MCF 10A (cell line): ENCODE measurements at regions of chr14 and their contacts with region 1.

Region 1: DNA sequence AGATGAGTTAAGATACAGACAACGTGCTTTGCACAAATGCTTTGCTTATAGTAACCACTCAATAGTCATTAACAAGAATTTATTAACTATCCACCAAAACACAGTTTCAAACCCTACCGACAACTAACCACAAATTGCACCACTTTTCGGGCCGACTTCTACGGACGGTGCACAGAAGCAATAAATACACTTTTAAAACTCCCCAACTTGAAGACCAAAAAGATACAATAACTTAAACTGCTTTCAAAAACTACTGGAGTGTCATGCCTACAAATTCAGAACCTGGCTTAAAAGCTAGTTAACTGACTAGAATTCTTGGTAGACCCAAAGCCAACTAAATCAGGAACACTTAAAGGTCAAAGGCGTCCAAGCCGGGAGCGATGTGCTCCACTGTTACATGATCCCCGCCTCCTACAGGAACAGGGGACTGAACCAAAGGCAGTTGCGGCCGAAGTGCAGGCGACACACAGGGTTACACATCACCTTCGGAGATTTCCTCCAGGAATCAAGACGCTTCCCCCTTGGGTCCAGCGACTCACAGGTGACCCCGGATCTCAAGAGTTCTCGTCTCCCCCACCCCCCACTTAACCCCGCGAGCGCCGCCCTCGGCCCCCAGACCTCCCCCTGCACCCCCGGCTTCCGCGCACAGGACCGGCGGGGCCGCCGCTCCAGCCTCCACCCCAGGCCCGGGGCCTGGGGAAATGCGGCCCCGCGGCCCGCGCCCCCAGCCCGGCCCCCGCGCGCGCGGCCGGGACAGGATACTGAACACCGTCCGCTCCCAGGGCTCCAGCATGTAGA is 507 bp downstream of the SPTSSA start:
- DNase-seq: peak; percentile 62
- H3K4me3 Mint-ChIP-seq: peak overlapping the region; percentile 91
- H3K27ac Mint-ChIP-seq: peak overlapping the region; percentile 85
- H3K4me1 Mint-ChIP-seq: peaks cover 13% of the 10 kb centered on the region
- H3K27me3 Mint-ChIP-seq: no peaks in the 10 kb centered on the region
- CTCF ChIP-seq: no peak

Region 2: DNA sequence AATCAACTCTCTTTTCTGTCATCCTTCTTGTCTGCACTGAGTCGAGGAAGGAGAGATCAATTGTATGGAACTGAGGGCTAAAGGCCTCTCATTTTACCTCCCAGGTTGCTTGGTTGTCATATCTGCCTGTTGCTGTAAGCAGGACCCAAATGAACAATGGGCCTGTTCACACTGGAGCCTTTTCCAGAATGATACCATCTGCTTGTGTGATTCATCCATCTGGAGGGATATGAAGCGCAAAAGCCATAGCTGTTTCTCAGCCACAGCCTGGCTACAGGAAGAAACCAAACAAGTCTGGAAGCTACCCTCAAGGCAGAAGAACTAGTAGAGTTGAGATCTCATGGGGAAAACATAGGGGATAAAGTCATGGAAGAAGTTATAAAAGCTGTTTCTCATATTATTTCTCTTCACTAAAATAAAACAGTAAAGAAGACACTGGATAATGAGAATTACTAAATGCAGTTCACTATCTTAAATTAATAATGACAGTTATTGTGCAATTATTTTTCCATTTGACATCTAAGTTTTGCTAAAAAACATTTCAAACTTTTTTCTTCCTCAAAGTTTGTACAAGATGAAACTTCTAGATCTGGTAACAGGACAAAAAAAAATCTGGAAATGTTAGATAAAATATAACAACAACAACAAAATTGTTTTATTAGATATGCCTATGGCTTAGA is 105.8 kb before region 1 on chr14:
- CTCF ChIA-PET with region 1: no interaction called
- POLR2A ChIA-PET with region 1: interaction called, 11 read pairs
- intact Hi-C with region 1: no loop called
- DNase-seq: peak; percentile 67
- H3K4me3 Mint-ChIP-seq: no peak overlapping the region
- H3K27ac Mint-ChIP-seq: peak overlapping the region; percentile 59
- H3K4me1 Mint-ChIP-seq: peaks cover 30% of the 10 kb centered on the region
- H3K27me3 Mint-ChIP-seq: no peaks in the 10 kb centered on the region
- CTCF ChIP-seq: no peak

Region 3: DNA sequence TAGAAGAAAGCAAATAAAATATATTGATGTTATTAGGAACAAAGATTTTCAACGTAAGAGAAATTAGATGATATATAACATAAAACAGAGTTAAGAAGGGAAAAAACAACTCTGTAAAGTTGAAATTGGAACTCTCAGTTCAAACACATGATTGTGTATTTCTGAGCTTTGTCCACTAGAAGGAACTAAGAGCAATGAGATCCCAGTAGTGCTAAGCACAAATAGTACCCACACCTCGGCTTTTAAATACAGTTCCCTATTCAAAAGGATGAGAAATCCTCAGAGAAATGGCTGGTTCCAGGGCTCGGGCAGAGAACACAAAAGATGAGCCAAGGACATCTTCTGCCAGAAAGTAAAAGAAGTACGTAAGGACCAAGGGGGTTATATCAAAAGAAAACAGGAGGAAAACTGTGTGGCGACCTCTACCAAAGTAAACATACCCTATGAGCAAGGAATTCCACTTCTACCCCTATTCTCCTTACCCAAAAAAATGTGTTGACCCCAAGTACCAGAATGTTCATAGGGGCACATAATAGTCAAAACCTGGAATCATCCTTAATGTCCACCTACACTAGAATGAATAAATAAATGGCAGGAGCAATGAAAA is 96.1 kb before region 1 on chr14:
- CTCF ChIA-PET with region 1: interaction called, 4 read pairs
- POLR2A ChIA-PET with region 1: interaction called, 10 read pairs
- intact Hi-C with region 1: no loop called
- DNase-seq: no peak
- H3K4me3 Mint-ChIP-seq: no peak overlapping the region
- H3K27ac Mint-ChIP-seq: no peak overlapping the region
- H3K4me1 Mint-ChIP-seq: peaks cover 62% of the 10 kb centered on the region
- H3K27me3 Mint-ChIP-seq: no peaks in the 10 kb centered on the region
- CTCF ChIP-seq: no peak

Region 4: DNA sequence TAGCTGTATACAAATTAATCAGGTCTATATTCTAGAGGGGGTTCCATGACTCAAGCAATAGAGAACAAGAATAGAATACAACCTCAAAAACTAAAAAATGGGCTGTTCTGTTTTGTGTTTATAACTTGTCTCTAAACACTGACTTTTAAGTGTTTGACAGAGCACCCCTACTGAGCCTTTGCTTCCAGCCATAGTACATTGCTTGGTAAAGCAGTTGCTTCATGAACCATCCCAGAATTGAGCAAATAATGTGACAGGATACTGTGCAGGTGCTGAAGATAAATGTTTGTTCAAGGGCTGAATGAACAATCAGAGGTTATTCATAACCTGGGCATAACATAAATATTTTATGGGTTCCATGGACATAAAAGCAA is 11.0 kb before region 1 on chr14:
- CTCF ChIA-PET with region 1: no interaction called
- POLR2A ChIA-PET with region 1: interaction called, 20 read pairs
- intact Hi-C with region 1: no loop called
- DNase-seq: no peak
- H3K4me3 Mint-ChIP-seq: no peak overlapping the region
- H3K27ac Mint-ChIP-seq: no peak overlapping the region
- H3K4me1 Mint-ChIP-seq: no peaks in the 10 kb centered on the region
- H3K27me3 Mint-ChIP-seq: no peaks in the 10 kb centered on the region
- CTCF ChIP-seq: no peak

Region 5: DNA sequence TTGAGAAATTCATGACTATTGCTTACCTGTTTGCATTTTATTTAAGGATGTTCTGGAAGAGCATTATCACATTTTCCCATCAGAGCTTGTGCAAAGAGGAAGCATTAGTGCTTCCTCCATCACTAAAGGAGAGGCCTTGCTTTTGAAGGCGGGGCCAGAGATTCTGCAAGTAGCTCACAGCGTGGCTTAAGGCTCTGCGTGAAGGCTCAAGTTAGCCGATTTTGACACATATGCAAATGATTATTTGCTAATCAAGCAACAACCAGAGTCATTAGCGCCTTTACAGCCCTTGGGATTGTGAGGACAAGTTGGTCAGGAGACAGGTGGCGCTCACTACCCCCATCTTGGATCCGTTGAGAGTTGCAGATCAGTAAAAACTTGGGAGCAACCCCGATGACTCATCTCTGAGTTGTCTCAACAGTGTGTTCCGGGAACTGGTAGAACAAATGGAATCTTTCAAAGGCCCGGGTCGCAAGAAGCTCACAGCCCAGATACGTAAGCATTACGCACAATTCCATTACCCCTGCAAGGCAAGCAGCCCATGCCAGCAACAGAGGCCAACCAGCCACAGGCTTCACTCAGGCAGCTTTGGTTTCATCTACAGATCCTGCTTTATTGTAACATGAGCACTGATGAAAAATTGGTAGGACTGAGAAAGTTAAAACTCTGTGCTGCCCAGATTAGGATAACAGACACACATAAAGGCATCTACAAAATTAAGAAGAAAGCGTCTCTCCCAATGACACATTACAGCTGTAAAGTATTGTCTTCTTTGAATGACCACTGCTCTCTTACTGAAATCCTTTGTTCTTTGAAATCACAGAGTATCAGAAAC is 35.4 kb after region 1 on chr14:
- CTCF ChIA-PET with region 1: interaction called, 6 read pairs
- POLR2A ChIA-PET with region 1: interaction called, 76 read pairs
- intact Hi-C with region 1: loop called (anchors 5 kb)
- DNase-seq: peak; percentile 99
- H3K4me3 Mint-ChIP-seq: peak overlapping the region; percentile 26
- H3K27ac Mint-ChIP-seq: peak overlapping the region; percentile 97
- H3K4me1 Mint-ChIP-seq: peaks cover 18% of the 10 kb centered on the region
- H3K27me3 Mint-ChIP-seq: no peaks in the 10 kb centered on the region
- CTCF ChIP-seq: no peak